ENCODE measurements at regions of chr7 and their contacts with region 1.

Region 1: GRCh38 chr7:106176414-106177299 is 64.5 kb upstream of the SYPL1 start:
- DNase-seq: peak; percentile 93
- ATAC-seq: peak; percentile 63
- H3K4me3 ChIP-seq: no peak overlapping the region
- H3K27ac ChIP-seq: no peak overlapping the region
- H3K4me1 ChIP-seq: peaks cover 20% of the 10 kb centered on the region
- H3K27me3 ChIP-seq: no peaks in the 10 kb centered on the region
- CTCF ChIP-seq: peak; percentile 99

Region 2: GRCh38 chr7:105531792-105532671 is 644.6 kb before region 1 on chr7 and contains the start of gene RINT1:
- CTCF ChIA-PET with region 1: interaction called, 4 read pairs
- POLR2A ChIA-PET with region 1: no interaction called
- intact Hi-C with region 1: loop called (anchors 5 kb)
- DNase-seq: peak; percentile 96
- ATAC-seq: peak; percentile 98
- H3K4me3 ChIP-seq: peak within 1 kb of the TSS; percentile 91
- H3K27ac ChIP-seq: peak within 1 kb of the TSS; percentile 12; the same call in 1 of the 2 replicates
- H3K4me1 ChIP-seq: peaks cover 18% of the 10 kb centered on the region
- H3K27me3 ChIP-seq: no peaks in the 10 kb centered on the region
- CTCF ChIP-seq: peak; percentile 88
- total RNA-seq, gene RINT1: 20.8 TPM in 2 replicates

Region 3: DNA sequence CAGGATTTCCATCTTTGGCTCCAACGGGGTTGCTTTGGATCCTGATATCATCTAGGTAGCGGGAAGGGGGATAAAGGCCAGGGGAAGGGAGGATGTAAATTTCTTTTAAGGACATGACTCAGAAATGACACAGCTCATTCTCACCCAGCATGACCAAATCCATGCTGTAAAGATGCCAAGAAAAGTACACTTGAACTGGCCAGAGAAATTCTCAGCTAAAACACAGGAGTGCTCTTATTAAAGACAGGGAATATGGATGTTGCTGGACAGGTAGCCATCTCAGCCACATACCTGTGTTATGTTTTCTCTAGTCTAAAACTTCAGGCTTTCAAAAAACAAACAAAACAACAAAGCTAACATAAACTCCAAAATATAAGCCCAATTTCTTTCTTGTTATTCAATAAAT is 39.9 kb after region 1 on chr7:
- CTCF ChIA-PET with region 1: interaction called, 4 read pairs
- POLR2A ChIA-PET with region 1: no interaction called
- intact Hi-C with region 1: loop called (anchors 1 kb)
- DNase-seq: peak; percentile 99
- ATAC-seq: peak; percentile 90
- H3K4me3 ChIP-seq: peak overlapping the region; percentile 56
- H3K27ac ChIP-seq: peak overlapping the region; percentile 83
- H3K4me1 ChIP-seq: peaks cover 26% of the 10 kb centered on the region
- H3K27me3 ChIP-seq: no peaks in the 10 kb centered on the region
- CTCF ChIP-seq: no peak

Region 4: DNA sequence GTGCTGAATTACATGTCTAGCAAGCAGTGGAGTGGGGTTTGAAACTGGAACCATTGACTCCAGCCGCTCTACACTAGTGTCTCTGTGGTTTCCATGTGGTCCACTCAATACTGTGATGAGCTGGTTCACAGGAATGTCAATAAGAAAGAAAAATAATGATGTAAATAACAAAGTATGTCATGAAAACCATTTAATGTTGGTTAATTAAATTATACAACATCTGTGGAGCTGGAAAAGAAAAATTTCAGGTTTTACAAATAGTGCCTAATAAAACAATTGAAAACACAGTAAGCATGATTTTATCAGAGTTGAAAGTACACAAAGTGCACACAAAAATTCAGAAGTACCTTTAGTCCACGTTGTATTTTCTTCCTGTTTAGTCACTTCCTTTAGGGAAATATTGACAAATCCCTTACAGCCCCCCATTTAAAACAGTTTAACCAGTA is 136.8 kb after region 1 on chr7:
- CTCF ChIA-PET with region 1: no interaction called
- POLR2A ChIA-PET with region 1: no interaction called
- intact Hi-C with region 1: loop called (anchors 1 kb)
- DNase-seq: peak; percentile 92
- ATAC-seq: peak; percentile 88
- H3K4me3 ChIP-seq: peak overlapping the region; percentile 41
- H3K27ac ChIP-seq: peak overlapping the region; percentile 72
- H3K4me1 ChIP-seq: peaks cover 50% of the 10 kb centered on the region
- H3K27me3 ChIP-seq: no peaks in the 10 kb centered on the region
- CTCF ChIP-seq: no peak

Region 5: GRCh38 chr7:106339513-106340246 is 163.0 kb after region 1 on chr7:
- CTCF ChIA-PET with region 1: no interaction called
- POLR2A ChIA-PET with region 1: no interaction called
- intact Hi-C with region 1: no loop called
- DNase-seq: no peak
- ATAC-seq: no peak
- H3K4me3 ChIP-seq: no peak overlapping the region
- H3K27ac ChIP-seq: no peak overlapping the region
- H3K4me1 ChIP-seq: 0 out of 2 replicates have a peak, but pooled peaks cover 1% of the 10 kb centered on the region
- H3K27me3 ChIP-seq: no peaks in the 10 kb centered on the region
- CTCF ChIP-seq: no peak

Region 6: DNA sequence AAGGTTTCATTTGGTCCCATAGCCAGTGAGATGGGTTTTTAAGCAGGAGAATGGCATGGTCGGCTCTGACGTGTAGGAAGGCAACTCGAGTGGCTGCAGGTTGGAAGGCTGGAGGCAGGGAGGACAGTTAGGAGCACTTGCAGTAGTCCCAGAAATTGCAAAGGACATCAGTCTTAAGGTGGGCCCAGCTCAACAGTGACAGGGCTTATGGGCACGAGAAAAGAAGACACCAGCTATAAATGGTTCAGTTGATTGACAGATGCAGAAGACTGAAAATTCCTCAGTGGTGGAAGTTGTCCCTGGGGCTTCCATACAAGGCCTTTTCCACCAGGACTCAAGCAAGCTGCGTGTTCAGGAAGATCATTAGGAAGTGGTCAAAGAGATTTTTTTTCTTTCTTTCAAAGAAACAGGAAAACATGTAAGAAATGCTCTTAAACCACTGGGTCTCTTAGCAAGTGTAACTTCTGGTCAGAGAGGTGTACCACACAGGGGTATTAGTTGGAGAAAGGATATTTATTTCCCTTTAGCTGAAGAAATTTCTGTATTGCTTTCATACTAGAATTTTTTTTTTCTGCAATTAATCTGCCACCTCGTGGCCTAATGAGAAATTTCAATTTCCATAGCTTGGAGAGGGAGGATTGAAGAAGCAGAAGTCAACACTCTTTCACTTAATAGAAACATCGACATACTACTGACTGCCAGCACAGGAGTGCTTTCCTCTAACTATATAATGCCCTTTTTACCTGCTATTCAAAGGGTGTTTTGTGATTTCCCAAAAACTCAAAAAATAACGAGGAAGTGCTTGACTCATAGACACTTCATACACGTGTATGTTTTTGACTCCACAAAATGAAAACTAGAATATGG is 285.6 kb after region 1 on chr7:
- CTCF ChIA-PET with region 1: interaction called, 117 read pairs
- POLR2A ChIA-PET with region 1: interaction called, 3 read pairs
- intact Hi-C with region 1: loop called (anchors 1 kb)
- DNase-seq: peak; percentile 81
- ATAC-seq: peak; percentile 59
- H3K4me3 ChIP-seq: no peak overlapping the region
- H3K27ac ChIP-seq: no peak overlapping the region
- H3K4me1 ChIP-seq: peaks cover 28% of the 10 kb centered on the region
- H3K27me3 ChIP-seq: no peaks in the 10 kb centered on the region
- CTCF ChIP-seq: peak; percentile 82

Region 7: DNA sequence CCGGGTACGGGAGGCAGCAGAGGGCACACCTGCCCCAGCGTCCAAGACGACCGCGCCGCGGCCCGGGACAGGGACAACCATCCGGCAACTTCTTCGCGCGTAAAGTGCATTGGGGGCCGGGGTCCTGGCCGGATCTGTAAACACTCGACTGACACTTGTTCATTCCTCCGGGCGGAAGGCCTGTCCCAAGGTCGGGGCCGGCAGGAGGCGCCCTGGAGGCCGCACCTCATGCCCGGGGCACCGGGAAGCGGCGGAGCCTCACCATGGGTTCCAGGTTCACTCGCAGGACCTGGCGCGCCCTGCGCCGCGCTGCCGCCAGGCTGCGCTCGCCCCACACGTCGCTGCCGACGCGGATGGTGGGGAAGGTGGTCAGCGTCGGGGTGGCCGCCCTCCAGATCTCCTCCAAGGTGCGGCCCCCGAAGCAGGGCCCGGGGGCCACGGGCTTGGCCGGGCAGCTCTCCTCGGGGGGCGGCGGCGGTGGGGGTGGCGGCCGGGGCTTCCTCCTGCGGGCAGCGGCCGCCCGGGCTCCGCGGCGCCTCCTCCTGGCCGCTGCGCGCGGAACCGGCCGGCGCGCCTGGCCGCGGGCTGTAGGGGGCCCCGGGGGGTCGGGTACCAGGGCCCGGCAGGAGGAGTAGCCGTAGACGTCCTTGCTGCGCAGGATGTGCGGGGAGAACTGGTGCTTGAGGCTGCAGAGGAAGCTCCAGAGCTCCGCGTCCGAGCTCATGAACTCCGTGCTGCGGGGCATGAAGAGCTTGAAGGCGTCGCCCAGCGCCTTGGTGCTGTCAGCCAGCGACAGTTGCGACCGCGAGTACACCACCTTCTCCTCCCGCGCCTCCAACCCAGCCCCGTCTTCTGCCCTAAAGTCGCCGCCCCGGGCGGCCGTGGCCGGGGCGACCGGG is 483.6 kb after region 1 on chr7:
- CTCF ChIA-PET with region 1: interaction called, 5 read pairs
- POLR2A ChIA-PET with region 1: interaction called, 3 read pairs
- intact Hi-C with region 1: loop called (anchors 1 kb)
- DNase-seq: peak; percentile 79
- ATAC-seq: peak; percentile 66
- H3K4me3 ChIP-seq: peak overlapping the region; percentile 88
- H3K27ac ChIP-seq: peak overlapping the region; percentile 38
- H3K4me1 ChIP-seq: peaks cover 8% of the 10 kb centered on the region; the same call in 1 of the 2 replicates
- H3K27me3 ChIP-seq: no peaks in the 10 kb centered on the region
- CTCF ChIP-seq: peak; percentile 80

Region 8: GRCh38 chr7:107150375-107151073 is 973.9 kb after region 1 on chr7:
- CTCF ChIA-PET with region 1: no interaction called
- POLR2A ChIA-PET with region 1: no interaction called
- intact Hi-C with region 1: loop called (anchors 10 kb)
- DNase-seq: peak; percentile 74
- ATAC-seq: peak; percentile 53
- H3K4me3 ChIP-seq: no peak overlapping the region
- H3K27ac ChIP-seq: no peak overlapping the region
- H3K4me1 ChIP-seq: peaks cover 9% of the 10 kb centered on the region
- H3K27me3 ChIP-seq: no peaks in the 10 kb centered on the region
- CTCF ChIP-seq: peak; percentile 77